CD8-positive, alpha-beta T cell (primary cell): ENCODE measurements at regions of chr10 and their contacts with region 1.

Region 1: GRCh38 chr10:30529373-30529998 is 95.5 kb downstream of the MAP3K8 start:
- DNase-seq: peak; percentile 64 to 94 (median 77)
- ATAC-seq: peak; percentile 79
- H3K4me3 ChIP-seq: peak overlapping the region; percentile 47 to 63
- H3K4me3 Mint-ChIP-seq: peak overlapping the region; percentile 86
- H3K27ac ChIP-seq: peak overlapping the region; percentile 89 to 94
- H3K27ac Mint-ChIP-seq: peak overlapping the region; percentile 99
- H3K4me1 ChIP-seq: peaks cover 47% of the 10 kb centered on the region
- H3K4me1 Mint-ChIP-seq: peaks cover 66% of the 10 kb centered on the region
- H3K27me3 ChIP-seq: no peaks in the 10 kb centered on the region
- H3K27me3 Mint-ChIP-seq: no peaks in the 10 kb centered on the region
- CTCF ChIP-seq: no peak

Region 2: GRCh38 chr10:29761916-29762315 is 767.6 kb before region 1 on chr10:
- CTCF ChIA-PET with region 1: no interaction called
- POLR2A ChIA-PET with region 1: no interaction called
- intact Hi-C with region 1: no loop called
- DNase-seq: no peak
- ATAC-seq: no peak
- H3K4me3 ChIP-seq: no peak overlapping the region
- H3K4me3 Mint-ChIP-seq: no peak overlapping the region
- H3K27ac ChIP-seq: no peak overlapping the region
- H3K27ac Mint-ChIP-seq: no peak overlapping the region
- H3K4me1 ChIP-seq: no peaks in the 10 kb centered on the region
- H3K4me1 Mint-ChIP-seq: no peaks in the 10 kb centered on the region
- H3K27me3 ChIP-seq: no peaks in the 10 kb centered on the region
- H3K27me3 Mint-ChIP-seq: no peaks in the 10 kb centered on the region
- CTCF ChIP-seq: no peak

Region 3: DNA sequence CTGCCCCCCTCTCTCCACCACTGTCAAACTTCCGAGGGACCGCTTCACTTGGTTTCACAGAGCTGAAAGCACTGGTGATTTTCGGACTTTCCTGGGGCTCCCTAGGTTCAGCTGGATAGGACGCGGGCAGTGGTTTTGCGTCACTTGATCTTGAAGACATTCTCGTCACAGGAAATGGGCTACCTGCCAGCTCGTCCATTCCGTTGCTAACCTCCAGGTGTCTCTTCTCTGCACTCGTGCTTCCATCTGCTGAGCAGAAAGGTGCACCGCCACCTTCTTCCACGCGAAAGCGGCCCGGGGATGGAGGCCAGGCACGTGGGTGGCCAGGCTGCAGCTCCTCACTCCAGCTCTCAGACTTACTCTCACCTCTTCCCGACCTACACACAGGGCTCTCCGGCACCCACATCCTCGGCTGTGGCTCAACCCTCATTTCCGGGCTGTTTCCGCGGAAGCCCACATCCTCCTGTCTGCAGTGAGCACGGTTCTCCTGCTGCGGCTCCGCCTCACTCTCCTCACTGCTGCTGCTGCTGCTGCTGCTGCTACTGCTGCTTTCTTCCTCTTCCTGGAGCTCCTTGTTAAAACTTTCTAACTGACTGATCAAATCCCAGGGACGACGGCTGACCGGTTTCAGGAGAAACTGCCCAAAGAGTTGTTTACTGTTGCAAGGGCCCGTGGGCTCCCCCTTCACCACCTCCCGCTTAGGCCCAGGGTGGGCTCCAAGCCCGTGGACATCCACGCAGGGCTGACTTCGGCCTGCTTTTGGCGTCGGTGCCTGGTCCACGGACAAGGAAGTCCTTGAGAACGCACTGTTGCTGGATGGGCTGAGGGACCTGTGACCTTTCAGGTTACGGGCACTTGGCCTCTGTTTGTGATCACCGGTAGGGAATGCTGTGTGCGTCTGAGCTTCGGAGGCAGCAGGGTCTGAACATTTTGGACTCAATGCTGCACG is 502.2 kb before region 1 on chr10:
- CTCF ChIA-PET with region 1: no interaction called
- POLR2A ChIA-PET with region 1: no interaction called
- intact Hi-C with region 1: loop called (anchors 5 to 10 kb)
- DNase-seq: peak; percentile 79 to 96 (median 85)
- ATAC-seq: peak; percentile 88
- H3K4me3 ChIP-seq: peak overlapping the region; percentile 33 to 53
- H3K4me3 Mint-ChIP-seq: peak overlapping the region; percentile 62
- H3K27ac ChIP-seq: peak overlapping the region in 1 of 2 experiments; percentile 41
- H3K27ac Mint-ChIP-seq: peak overlapping the region; percentile 80
- H3K4me1 ChIP-seq: peaks cover 37% of the 10 kb centered on the region
- H3K4me1 Mint-ChIP-seq: peaks cover 35% of the 10 kb centered on the region
- H3K27me3 ChIP-seq: peaks cover 24 to 34% of the 10 kb centered on the region in 2 experiments
- H3K27me3 Mint-ChIP-seq: peaks cover 55% of the 10 kb centered on the region
- CTCF ChIP-seq: peak; percentile 32

Region 4: DNA sequence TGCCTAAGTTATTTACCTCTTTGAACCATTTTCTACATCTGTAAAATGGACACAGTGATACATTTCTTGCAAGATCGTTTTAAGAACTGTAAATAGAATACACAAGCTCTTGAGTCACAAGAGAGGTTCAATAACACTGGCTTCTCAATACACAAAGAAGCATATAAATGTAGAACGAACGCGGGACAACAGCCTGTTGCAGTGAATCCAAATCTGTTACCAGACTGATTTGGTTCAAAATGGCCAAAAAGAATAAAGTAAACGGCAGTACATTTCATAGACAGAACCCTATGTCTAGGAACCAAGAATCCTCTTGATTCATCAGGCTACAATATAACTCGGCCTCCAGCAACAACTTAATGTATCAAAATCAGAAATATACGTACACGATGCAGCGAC is 181.1 kb before region 1 on chr10:
- CTCF ChIA-PET with region 1: interaction called, 4 read pairs
- POLR2A ChIA-PET with region 1: interaction called, 4 read pairs
- intact Hi-C with region 1: loop called (anchors 2 to 5 kb)
- DNase-seq: no peak
- ATAC-seq: peak; percentile 16
- H3K4me3 ChIP-seq: peak overlapping the region; percentile 95 to 98
- H3K4me3 Mint-ChIP-seq: peak overlapping the region; percentile 91
- H3K27ac ChIP-seq: peak overlapping the region; percentile 79 to 84
- H3K27ac Mint-ChIP-seq: peak overlapping the region; percentile 95
- H3K4me1 ChIP-seq: peaks cover 38% of the 10 kb centered on the region
- H3K4me1 Mint-ChIP-seq: peaks cover 51% of the 10 kb centered on the region
- H3K27me3 ChIP-seq: no peaks in the 10 kb centered on the region
- H3K27me3 Mint-ChIP-seq: no peaks in the 10 kb centered on the region
- CTCF ChIP-seq: no peak

Region 5: DNA sequence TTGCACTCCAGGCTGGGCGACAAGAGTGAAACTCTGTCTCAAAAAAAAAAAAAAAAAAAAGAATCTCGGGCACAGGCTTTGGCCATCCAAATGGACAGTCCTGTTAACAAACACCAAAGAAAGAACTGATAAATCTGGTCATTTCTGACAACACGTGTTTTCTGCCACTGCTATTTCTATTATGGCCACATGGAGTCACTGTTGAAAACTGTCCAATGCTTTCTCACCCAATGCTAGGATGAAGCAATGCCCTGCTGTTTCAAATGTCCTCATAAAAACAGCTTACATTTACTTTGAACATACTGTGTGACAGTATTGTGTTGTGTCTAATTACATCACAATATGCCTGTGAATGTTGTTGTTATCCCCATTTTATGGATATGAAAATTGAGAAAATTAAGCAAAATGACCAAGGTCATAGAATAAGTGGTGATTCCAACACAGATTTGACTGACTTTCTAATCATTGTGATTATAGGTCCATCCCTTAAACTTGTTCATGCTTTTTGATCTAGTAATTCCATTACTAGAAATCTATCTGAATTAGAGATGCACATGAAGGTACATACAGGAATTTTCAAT is 115.4 kb before region 1 on chr10:
- CTCF ChIA-PET with region 1: interaction called, 91 read pairs
- POLR2A ChIA-PET with region 1: interaction called, 9 read pairs
- intact Hi-C with region 1: loop called (anchors 1 kb)
- DNase-seq: peak in 2 of 9 experiments; percentile 66 to 78
- ATAC-seq: peak; percentile 73
- H3K4me3 ChIP-seq: no peak overlapping the region
- H3K4me3 Mint-ChIP-seq: no peak overlapping the region
- H3K27ac ChIP-seq: no peak overlapping the region
- H3K27ac Mint-ChIP-seq: no peak overlapping the region
- H3K4me1 ChIP-seq: peaks cover 10% of the 10 kb centered on the region
- H3K4me1 Mint-ChIP-seq: peaks cover 9% of the 10 kb centered on the region
- H3K27me3 ChIP-seq: no peaks in the 10 kb centered on the region
- H3K27me3 Mint-ChIP-seq: no peaks in the 10 kb centered on the region
- CTCF ChIP-seq: peak; percentile 66

Region 6: GRCh38 chr10:30433730-30434272 is 95.7 kb before region 1 on chr10 and contains the start of gene MAP3K8:
- CTCF ChIA-PET with region 1: interaction called, 8 read pairs
- POLR2A ChIA-PET with region 1: interaction called, 27 read pairs
- intact Hi-C with region 1: loop called (anchors 5 kb)
- DNase-seq: peak; percentile 62 to 95 (median 81)
- ATAC-seq: peak; percentile 76
- H3K4me3 ChIP-seq: peak within 1 kb of the TSS; percentile 84 to 92
- H3K4me3 Mint-ChIP-seq: peak within 1 kb of the TSS; percentile 91
- H3K27ac ChIP-seq: peak within 1 kb of the TSS; percentile 50 to 90
- H3K27ac Mint-ChIP-seq: peak within 1 kb of the TSS; percentile 87
- H3K4me1 ChIP-seq: peaks cover 25% of the 10 kb centered on the region
- H3K4me1 Mint-ChIP-seq: peaks cover 44% of the 10 kb centered on the region
- H3K27me3 ChIP-seq: peaks cover 0 to 3% of the 10 kb centered on the region in 2 experiments
- H3K27me3 Mint-ChIP-seq: no peaks in the 10 kb centered on the region
- CTCF ChIP-seq: no peak
- total RNA-seq, gene MAP3K8: 42.4 to 48.6 TPM

Region 7: GRCh38 chr10:30493609-30494530 is 35.6 kb before region 1 on chr10:
- CTCF ChIA-PET with region 1: interaction called, 6 read pairs
- POLR2A ChIA-PET with region 1: interaction called, 4 read pairs
- intact Hi-C with region 1: loop called (anchors 5 kb)
- DNase-seq: peak in 1 of 9 experiments; percentile 50
- ATAC-seq: no peak
- H3K4me3 ChIP-seq: no peak overlapping the region
- H3K4me3 Mint-ChIP-seq: no peak overlapping the region
- H3K27ac ChIP-seq: peak overlapping the region in 1 of 2 experiments; percentile 34
- H3K27ac Mint-ChIP-seq: peak overlapping the region; percentile 37
- H3K4me1 ChIP-seq: peaks cover 48% of the 10 kb centered on the region
- H3K4me1 Mint-ChIP-seq: peaks cover 72% of the 10 kb centered on the region
- H3K27me3 ChIP-seq: no peaks in the 10 kb centered on the region
- H3K27me3 Mint-ChIP-seq: no peaks in the 10 kb centered on the region
- CTCF ChIP-seq: no peak

Region 8: DNA sequence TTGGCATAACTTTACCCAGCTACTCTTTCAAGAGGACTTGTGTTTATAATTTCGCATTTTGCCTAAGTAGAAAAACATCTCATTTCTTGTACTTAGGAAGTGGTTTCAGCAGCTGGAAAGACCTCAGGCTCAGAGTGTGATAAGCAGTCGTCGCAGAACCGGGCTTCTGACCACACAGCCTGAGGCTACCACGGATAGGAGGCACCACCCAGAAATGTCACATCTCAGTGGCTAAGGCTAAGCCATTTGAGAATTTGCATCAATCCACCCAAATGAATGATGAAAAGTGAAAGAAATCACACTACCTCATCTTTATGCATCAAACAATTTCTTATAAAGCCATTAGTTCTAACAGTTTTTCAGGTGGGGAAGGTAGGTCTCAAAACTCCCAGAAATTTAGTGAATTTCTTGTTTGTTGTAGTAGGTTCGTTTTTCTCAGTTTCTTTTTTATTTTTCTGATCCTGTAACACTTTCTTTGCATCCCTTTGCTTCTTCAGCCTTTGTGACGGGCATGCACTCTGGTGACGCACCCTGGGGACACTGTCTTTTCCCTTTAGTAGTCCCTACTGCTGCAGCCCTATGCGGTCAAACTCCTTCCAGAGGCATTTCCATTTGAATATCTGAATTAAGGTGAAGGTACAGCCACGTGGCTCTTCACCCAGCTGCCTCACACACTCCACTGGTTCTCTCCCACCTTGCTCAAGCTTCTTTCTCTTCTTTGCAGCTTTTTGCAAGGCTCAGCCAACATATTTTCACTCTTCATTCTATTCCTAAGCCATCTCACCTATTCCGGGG is 27.0 kb before region 1 on chr10:
- CTCF ChIA-PET with region 1: interaction called, 4 read pairs
- POLR2A ChIA-PET with region 1: interaction called, 9 read pairs
- intact Hi-C with region 1: loop called (anchors 2 to 5 kb)
- DNase-seq: peak in 8 of 9 experiments; percentile 27 to 88 (median 53)
- ATAC-seq: peak; percentile 89
- H3K4me3 ChIP-seq: peak overlapping the region in 1 of 2 experiments; percentile 27
- H3K4me3 Mint-ChIP-seq: peak overlapping the region; percentile 44
- H3K27ac ChIP-seq: peak overlapping the region; percentile 30 to 80
- H3K27ac Mint-ChIP-seq: peak overlapping the region; percentile 49
- H3K4me1 ChIP-seq: peaks cover 37% of the 10 kb centered on the region
- H3K4me1 Mint-ChIP-seq: peaks cover 62% of the 10 kb centered on the region
- H3K27me3 ChIP-seq: no peaks in the 10 kb centered on the region
- H3K27me3 Mint-ChIP-seq: no peaks in the 10 kb centered on the region
- CTCF ChIP-seq: no peak

Region 9: GRCh38 chr10:30763918-30764317 is 234.4 kb after region 1 on chr10:
- CTCF ChIA-PET with region 1: no interaction called
- POLR2A ChIA-PET with region 1: no interaction called
- intact Hi-C with region 1: no loop called
- DNase-seq: no peak
- ATAC-seq: no peak
- H3K4me3 ChIP-seq: no peak overlapping the region
- H3K4me3 Mint-ChIP-seq: no peak overlapping the region
- H3K27ac ChIP-seq: no peak overlapping the region
- H3K27ac Mint-ChIP-seq: no peak overlapping the region
- H3K4me1 ChIP-seq: no peaks in the 10 kb centered on the region
- H3K4me1 Mint-ChIP-seq: no peaks in the 10 kb centered on the region
- H3K27me3 ChIP-seq: no peaks in the 10 kb centered on the region
- H3K27me3 Mint-ChIP-seq: no peaks in the 10 kb centered on the region
- CTCF ChIP-seq: no peak